CD4-positive, alpha-beta memory T cell (primary cell): ENCODE measurements at regions of chr1 and their contacts with region 1.

Region 1: DNA sequence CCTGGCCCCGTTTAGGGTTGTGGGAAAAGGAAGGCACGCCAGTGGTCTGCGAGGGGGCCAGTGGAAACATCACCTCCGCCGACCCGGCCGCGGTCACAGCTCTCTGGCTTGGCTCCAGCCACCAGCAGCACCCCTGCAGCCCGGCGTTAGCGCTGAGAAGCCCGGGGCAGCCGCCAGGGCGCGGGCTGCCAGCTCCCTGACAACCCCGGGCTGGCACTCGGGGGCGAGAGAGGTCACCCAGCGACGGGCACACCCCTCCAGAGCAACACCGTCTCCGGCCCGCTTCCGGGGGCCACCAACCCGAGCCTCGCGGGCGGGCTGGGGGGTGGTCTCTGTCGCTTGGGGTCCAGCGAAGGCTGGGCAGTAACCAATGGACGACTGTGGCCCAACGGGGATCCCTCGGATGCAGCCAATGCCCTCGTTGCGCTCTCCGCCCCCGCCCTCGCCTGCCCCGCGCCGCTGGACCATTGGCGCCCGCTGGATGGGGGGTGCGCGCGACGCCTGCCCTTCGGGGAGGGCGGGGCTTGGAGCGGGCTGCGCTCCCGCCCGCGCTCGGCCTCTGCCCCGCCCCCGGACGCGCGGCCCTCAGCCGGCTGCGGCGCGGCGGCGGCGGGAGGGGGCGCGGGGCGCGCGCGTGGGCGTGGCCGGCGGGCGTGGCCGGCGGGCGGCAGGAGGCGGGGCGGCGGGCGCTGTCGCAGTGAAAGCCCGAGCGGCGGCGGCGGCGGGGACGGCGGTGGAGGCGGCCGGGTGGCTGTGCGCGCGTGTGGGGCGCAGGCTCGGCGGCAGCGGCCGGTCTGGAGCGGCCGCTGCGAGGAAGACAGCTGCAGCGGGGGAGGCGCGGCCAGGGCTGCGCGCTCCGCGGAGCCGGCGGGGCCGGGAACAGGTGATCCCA is at the start of gene MAN1C1:
- DNase-seq: peak; percentile 77 to 87 (median 85)
- H3K4me3 ChIP-seq: peak within 1 kb of the TSS in 1 of 2 donors; percentile 71
- H3K4me3 Mint-ChIP-seq: peak within 1 kb of the TSS; percentile 64 to 85 (median 78)
- H3K27ac ChIP-seq: peak within 1 kb of the TSS; percentile 65
- H3K27ac Mint-ChIP-seq: peak within 1 kb of the TSS; percentile 43 to 86 (median 75)
- H3K4me1 ChIP-seq: peaks cover 58% of the 10 kb centered on the region
- H3K4me1 Mint-ChIP-seq: peaks cover 48 to 53% (median 49%) of the 10 kb centered on the region in 4 donors
- H3K27me3 ChIP-seq: no peaks in the 10 kb centered on the region
- H3K27me3 Mint-ChIP-seq: no peaks in the 10 kb centered on the region
- total RNA-seq, gene MAN1C1: 42.6 to 45.1 TPM

Region 2: DNA sequence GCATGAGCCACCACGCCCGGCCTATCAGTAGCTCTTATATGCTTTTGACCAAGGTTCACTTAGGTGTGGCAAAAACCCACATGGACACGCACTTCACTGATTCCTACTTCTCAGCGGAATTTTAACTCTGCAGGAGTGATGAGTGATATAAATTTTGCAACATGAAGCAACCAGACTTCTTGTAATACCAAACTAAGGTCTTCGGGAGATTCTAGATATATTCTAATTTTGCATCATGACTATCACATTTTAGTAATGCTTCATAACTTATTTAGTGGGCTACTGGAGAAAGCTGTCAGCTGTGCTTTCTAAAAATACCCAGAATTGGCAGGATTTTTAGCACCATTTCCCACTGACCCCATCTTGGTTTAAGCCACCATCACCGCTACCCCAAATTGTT is 223.5 kb before region 1 on chr1:
- CTCF ChIA-PET with region 1: no interaction called
- POLR2A ChIA-PET with region 1: no interaction called
- intact Hi-C with region 1: no loop called
- DNase-seq: no peak
- H3K4me3 ChIP-seq: no peak overlapping the region
- H3K4me3 Mint-ChIP-seq: no peak overlapping the region
- H3K27ac ChIP-seq: no peak overlapping the region
- H3K27ac Mint-ChIP-seq: no peak overlapping the region
- H3K4me1 ChIP-seq: no peaks in the 10 kb centered on the region
- H3K4me1 Mint-ChIP-seq: peaks cover 0 to 1% (median 0%) of the 10 kb centered on the region in 4 donors
- H3K27me3 ChIP-seq: no peaks in the 10 kb centered on the region
- H3K27me3 Mint-ChIP-seq: peaks cover 5 to 6% of the 10 kb centered on the region in 2 donors

Region 3: DNA sequence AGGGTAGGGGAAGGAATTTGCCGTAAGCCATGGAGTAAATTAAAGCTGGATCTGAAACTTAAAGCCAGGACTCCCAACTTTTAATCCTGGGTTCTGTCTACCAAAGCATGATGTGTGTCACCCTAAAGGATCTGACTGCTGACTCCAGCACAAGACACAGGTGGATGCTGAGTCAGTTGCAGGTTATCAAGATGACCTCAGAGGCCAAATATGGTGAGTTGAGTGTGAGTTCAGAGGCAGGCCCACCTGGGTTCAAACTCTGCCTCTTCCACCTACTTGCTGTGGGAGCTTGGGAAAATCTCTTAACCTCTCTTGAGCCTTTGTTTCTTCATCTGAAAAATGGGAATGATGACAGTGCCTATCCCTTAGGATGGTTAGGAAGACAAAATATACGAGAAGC is 89.6 kb before region 1 on chr1:
- CTCF ChIA-PET with region 1: no interaction called
- POLR2A ChIA-PET with region 1: no interaction called
- intact Hi-C with region 1: no loop called
- DNase-seq: no peak
- H3K4me3 ChIP-seq: no peak overlapping the region
- H3K4me3 Mint-ChIP-seq: no peak overlapping the region
- H3K27ac ChIP-seq: no peak overlapping the region
- H3K27ac Mint-ChIP-seq: peak overlapping the region in 1 of 7 donors; percentile 9
- H3K4me1 ChIP-seq: no peaks in the 10 kb centered on the region
- H3K4me1 Mint-ChIP-seq: peaks cover 0 to 6% (median 3%) of the 10 kb centered on the region in 4 donors
- H3K27me3 ChIP-seq: no peaks in the 10 kb centered on the region
- H3K27me3 Mint-ChIP-seq: no peaks in the 10 kb centered on the region

Region 4: DNA sequence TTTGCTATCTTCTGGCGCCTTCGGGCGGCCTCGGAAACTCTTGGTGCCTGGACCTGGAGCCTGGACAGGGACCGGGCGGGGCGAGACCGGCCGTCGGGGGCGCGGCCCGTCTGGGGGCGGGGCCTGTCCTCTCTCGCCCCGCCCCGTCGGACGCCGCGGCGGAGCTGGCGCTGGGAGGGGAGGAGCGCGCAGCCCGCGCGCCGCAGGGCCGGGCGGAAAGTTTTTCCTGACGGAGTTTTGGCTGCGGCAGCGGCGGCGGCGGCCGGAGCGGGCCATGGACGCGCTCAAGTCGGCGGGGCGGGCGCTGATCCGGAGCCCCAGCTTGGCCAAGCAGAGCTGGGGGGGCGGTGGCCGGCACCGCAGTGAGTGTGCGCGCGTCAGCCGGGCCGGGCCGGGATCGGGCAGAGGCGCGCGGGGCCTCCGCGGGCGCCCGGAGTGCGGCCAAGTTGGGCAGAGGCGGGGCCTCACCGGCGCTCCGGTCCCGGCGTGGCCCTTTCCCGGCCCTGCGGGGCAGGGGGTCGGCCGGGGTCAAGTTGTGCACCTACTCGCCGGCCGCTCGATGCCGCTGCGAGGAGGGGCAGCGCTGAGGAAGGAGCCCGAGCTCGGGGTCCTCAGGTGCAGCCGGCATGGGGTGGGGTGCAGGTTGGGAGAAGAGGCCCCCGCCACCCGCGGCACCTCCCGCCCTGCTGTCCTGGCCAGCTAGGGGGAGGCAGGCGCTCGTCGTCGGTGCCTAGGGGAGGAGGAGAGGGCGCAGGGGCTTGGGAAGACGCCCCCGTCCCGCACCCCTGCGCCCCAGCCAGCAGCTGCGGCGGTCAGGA is 72.7 kb before region 1 on chr1 and contains the start of gene LDLRAP1:
- CTCF ChIA-PET with region 1: interaction called, 3 read pairs
- POLR2A ChIA-PET with region 1: interaction called, 26 read pairs
- intact Hi-C with region 1: loop called (anchors 5 kb)
- DNase-seq: peak; percentile 47 to 70 (median 48)
- H3K4me3 ChIP-seq: peak within 1 kb of the TSS; percentile 44 to 58
- H3K4me3 Mint-ChIP-seq: peak within 1 kb of the TSS; percentile 86 to 96 (median 93)
- H3K27ac ChIP-seq: peak within 1 kb of the TSS; percentile 68
- H3K27ac Mint-ChIP-seq: peak within 1 kb of the TSS; percentile 77 to 93 (median 88)
- H3K4me1 ChIP-seq: peaks cover 40% of the 10 kb centered on the region
- H3K4me1 Mint-ChIP-seq: peaks cover 28 to 47% (median 41%) of the 10 kb centered on the region in 4 donors
- H3K27me3 ChIP-seq: no peaks in the 10 kb centered on the region
- H3K27me3 Mint-ChIP-seq: no peaks in the 10 kb centered on the region
- total RNA-seq, gene LDLRAP1: 201 to 210 TPM

Region 5: DNA sequence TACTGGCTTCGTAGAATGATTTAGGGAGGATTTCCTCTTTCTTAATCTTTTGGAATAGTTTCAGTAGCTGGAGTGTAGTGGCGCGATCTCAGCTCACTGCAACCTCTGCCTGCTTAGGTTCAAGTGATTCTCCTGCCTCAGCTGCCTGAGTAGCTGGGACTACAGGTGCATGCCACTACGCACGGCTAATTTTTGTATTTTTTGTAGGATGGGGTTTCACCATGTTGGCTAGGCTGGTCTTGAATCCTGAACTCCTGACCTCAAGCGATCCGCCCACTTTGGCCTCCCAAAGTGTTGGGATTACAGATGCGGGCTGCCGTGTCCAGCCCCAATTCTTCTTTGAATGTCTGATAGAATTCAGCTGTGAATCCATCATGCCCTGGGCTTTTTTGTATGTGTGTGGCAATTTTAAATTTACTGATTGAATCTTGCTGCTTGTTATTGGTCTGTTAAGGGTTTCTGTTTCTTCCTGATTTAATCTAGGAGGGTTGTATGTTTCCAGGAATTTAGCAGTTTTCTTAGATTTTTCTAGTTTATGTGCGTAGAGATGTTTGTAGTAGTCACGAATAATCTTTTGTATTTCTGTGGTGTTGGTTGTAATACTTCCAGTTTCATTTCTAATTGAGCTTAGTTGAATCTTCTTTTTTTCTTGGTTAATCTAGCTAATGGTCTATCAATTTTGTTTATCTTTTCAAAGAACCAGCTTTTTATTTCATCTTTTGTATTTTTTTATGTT is 15.6 kb after region 1 on chr1:
- CTCF ChIA-PET with region 1: interaction called, 25 read pairs
- POLR2A ChIA-PET with region 1: interaction called, 27 read pairs
- intact Hi-C with region 1: loop called (anchors 2 kb)
- DNase-seq: peak in 2 of 5 donors; percentile 29 to 33
- H3K4me3 ChIP-seq: peak overlapping the region in 1 of 2 donors; percentile 33
- H3K4me3 Mint-ChIP-seq: peak overlapping the region; percentile 73 to 93 (median 84)
- H3K27ac ChIP-seq: peak overlapping the region; percentile 57
- H3K27ac Mint-ChIP-seq: peak overlapping the region; percentile 59 to 98 (median 95)
- H3K4me1 ChIP-seq: peaks cover 64% of the 10 kb centered on the region
- H3K4me1 Mint-ChIP-seq: peaks cover 49 to 74% (median 60%) of the 10 kb centered on the region in 4 donors
- H3K27me3 ChIP-seq: no peaks in the 10 kb centered on the region
- H3K27me3 Mint-ChIP-seq: no peaks in the 10 kb centered on the region

Region 6: GRCh38 chr1:25675729-25676476 is 59.6 kb after region 1 on chr1:
- CTCF ChIA-PET with region 1: interaction called, 20 read pairs
- POLR2A ChIA-PET with region 1: interaction called, 24 read pairs
- intact Hi-C with region 1: loop called (anchors 1 kb)
- DNase-seq: peak; percentile 74 to 83 (median 78)
- H3K4me3 ChIP-seq: peak overlapping the region in 1 of 2 donors; percentile 18
- H3K4me3 Mint-ChIP-seq: peak overlapping the region; percentile 74 to 89 (median 85)
- H3K27ac ChIP-seq: no peak overlapping the region
- H3K27ac Mint-ChIP-seq: peak overlapping the region; percentile 85 to 95 (median 92)
- H3K4me1 ChIP-seq: peaks cover 71% of the 10 kb centered on the region
- H3K4me1 Mint-ChIP-seq: peaks cover 66 to 88% (median 77%) of the 10 kb centered on the region in 4 donors
- H3K27me3 ChIP-seq: no peaks in the 10 kb centered on the region
- H3K27me3 Mint-ChIP-seq: no peaks in the 10 kb centered on the region

Region 7: DNA sequence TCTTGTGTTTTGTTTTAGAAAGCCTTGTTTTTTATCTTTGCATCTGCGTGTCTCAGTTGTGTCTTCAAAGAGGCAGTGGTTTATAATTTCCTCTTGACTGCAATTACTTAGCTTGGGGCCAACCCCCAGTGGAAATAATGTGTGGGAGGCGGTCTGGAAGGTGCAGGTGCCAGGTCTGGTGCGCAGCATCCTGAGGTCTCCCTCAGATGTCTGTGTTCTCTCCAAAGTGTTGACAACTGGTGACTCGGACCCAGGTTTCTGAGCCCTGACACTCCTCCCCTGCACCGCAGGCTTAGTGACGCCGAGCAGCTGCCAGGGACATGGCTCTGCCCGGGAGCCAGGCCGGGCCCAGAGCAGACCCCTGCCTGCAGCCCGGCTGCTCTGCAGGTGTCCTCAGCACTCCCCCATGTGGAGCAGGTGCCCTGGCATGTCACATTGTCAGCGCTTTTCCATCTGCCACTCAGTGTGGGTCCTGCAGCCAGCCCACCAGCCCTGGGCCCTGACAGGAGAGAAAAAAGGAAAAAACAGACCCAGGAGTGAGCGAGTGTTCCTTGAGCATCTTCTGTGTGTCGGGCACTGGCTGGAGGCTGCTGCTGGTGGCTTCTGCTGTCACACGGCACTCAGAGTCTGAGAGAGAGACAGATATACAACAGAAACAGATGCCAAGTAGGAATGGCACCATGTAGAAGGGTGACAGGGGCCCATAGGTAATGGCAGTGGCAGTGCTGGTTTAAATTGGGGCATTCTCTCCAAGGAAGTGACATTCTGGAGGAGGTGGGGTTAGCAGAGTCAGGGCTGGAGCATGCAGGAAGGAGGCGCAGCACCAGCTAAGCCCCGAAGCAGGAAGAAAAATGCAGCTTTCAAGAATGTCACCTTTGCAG is 158.8 kb after region 1 on chr1:
- CTCF ChIA-PET with region 1: interaction called, 13 read pairs
- POLR2A ChIA-PET with region 1: interaction called, 42 read pairs
- intact Hi-C with region 1: loop called (anchors 1 kb)
- DNase-seq: peak; percentile 89 to 97 (median 91)
- H3K4me3 ChIP-seq: peak overlapping the region; percentile 8 to 47
- H3K4me3 Mint-ChIP-seq: peak overlapping the region; percentile 66 to 90 (median 82)
- H3K27ac ChIP-seq: peak overlapping the region; percentile 45
- H3K27ac Mint-ChIP-seq: peak overlapping the region; percentile 90 to 99 (median 93)
- H3K4me1 ChIP-seq: peaks cover 64% of the 10 kb centered on the region
- H3K4me1 Mint-ChIP-seq: peaks cover 48 to 73% (median 51%) of the 10 kb centered on the region in 4 donors
- H3K27me3 ChIP-seq: no peaks in the 10 kb centered on the region
- H3K27me3 Mint-ChIP-seq: no peaks in the 10 kb centered on the region

Region 8: GRCh38 chr1:25810341-25811299 is 194.3 kb after region 1 on chr1:
- CTCF ChIA-PET with region 1: interaction called, 13 read pairs
- POLR2A ChIA-PET with region 1: interaction called, 6 read pairs
- intact Hi-C with region 1: no loop called
- DNase-seq: peak; percentile 66 to 79 (median 69)
- H3K4me3 ChIP-seq: no peak overlapping the region
- H3K4me3 Mint-ChIP-seq: no peak overlapping the region
- H3K27ac ChIP-seq: no peak overlapping the region
- H3K27ac Mint-ChIP-seq: peak overlapping the region in 3 of 7 donors; percentile 35 to 84 (median 64)
- H3K4me1 ChIP-seq: peaks cover 5% of the 10 kb centered on the region
- H3K4me1 Mint-ChIP-seq: peaks cover 0 to 10% (median 2%) of the 10 kb centered on the region in 4 donors
- H3K27me3 ChIP-seq: no peaks in the 10 kb centered on the region
- H3K27me3 Mint-ChIP-seq: no peaks in the 10 kb centered on the region